ENCODE measurements at regions of chr5 and their contacts with region 1.

Region 1: DNA sequence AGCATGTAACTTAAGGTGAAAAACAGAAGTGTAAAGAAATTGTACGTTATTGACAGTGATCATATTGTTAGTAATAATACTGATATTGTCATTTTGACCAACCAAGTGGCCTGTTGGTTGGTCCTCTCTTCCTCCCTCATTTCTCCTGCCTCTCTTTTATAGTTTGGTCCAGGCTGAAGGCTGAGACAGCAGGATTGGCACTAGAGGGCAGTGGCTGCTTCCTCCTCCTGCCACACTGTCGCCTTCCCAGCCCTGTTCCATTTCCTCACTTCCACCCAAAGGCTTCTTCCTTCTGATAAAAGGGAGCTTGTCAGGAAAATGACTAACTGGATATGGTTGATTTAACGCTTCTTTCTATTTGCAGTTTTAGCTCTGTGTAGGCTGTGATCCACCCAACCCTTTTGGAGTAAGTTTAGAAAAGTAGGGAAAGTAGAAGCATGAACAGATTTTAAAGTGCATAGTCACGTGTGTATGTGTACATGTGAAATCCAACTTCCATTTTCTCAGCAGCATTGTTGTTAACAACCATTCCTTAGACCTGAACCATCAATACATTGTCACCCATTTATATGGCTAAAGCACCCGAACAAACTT is 35.6 kb downstream of the PTCD2 start:
- DNase-seq: peak; percentile 16 to 29
- ATAC-seq: peak; percentile 39 to 91
- H3K4me3 ChIP-seq: no peak overlapping the region
- H3K27ac ChIP-seq: no peak overlapping the region
- H3K4me1 ChIP-seq: no peaks in the 10 kb centered on the region
- H3K27me3 ChIP-seq: no peaks in the 10 kb centered on the region
- CTCF ChIP-seq: peak in 4 of 5 experiments; percentile 27 to 57 (median 38)
- POLR2A ChIP-seq: no peak

Region 2: DNA sequence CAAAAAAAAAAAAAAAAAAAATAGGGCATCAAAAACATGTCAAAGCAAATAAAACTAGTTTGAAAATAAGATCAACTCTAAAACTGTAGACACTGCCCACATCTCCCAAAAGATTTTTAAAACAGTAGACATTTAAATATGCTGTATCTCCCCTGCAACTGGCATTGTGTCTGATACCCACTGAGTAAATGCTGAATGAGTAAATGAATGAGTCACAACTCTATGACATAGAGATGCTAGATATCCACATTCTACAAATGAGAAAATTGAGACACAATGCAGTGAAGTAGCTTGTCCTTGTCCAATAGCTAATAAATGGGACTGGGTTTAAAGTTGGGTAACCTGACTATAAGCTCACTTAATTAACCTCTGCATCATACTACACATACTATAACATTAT is 262.6 kb before region 1 on chr5:
- in situ Hi-C with region 1: no loop called
- intact Hi-C with region 1: no loop called
- DNase-seq: no peak
- ATAC-seq: no peak
- H3K4me3 ChIP-seq: no peak overlapping the region
- H3K27ac ChIP-seq: no peak overlapping the region
- H3K4me1 ChIP-seq: no peaks in the 10 kb centered on the region
- H3K27me3 ChIP-seq: no peaks in the 10 kb centered on the region
- CTCF ChIP-seq: no peak
- POLR2A ChIP-seq: no peak

Region 3: DNA sequence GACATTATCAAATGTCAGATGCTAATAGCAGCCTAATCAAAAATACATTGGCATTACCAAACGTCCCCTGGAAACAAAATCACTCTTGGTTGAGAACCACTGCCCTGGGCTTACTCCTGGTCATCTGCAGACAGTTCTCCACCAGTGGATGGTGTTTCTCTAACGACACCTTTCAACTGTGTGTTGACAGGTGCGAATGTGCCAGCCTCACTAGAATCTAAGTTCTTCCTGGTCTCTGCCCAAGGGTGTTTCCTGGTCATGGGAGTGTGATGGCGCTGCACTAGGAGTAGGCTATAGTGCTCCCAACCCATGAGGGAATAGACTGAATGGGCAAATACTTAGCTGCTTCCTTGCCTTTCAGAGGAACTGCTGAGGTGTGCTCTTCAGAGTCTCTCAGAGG is 141.6 kb before region 1 on chr5:
- in situ Hi-C with region 1: no loop called
- intact Hi-C with region 1: no loop called
- DNase-seq: no peak
- ATAC-seq: no peak
- H3K4me3 ChIP-seq: no peak overlapping the region
- H3K27ac ChIP-seq: no peak overlapping the region
- H3K4me1 ChIP-seq: peaks cover 5 to 6% of the 10 kb centered on the region in 2 donors
- H3K27me3 ChIP-seq: no peaks in the 10 kb centered on the region
- CTCF ChIP-seq: no peak
- POLR2A ChIP-seq: no peak

Region 4: DNA sequence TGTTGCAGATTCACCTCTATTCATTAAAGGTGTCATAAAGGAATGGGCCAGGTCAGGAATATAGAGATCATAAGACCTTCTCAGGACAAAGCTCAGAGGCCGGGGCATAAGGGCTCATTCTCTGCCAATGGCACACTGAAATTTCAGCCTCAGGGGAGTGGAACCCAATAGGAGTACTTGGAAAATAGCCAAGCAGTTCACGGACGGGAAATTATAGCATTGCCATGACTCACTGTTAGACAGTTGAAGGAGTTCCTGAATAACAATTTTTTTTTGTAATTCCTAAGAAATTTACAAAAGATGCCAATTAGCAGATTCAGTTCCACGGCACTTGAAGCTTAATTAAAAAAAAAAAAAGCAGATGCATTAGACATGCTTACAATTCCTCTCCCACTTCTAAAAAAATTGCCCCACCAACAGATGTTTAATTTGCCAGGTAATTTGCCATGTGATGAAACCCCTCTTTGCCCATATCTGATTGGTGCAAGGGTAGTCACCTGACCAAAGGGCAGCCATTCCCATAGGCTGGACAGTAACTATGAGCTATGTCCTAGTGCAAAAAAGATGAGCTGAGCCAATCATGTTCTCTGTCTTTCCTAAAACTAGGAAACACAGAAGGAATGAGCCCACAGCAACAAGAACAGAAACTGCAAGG is 23.0 kb after region 1 on chr5:
- in situ Hi-C with region 1: no loop called
- intact Hi-C with region 1: no loop called
- DNase-seq: peak; percentile 69 to 78
- ATAC-seq: peak; percentile 86 to 88
- H3K4me3 ChIP-seq: no peak overlapping the region
- H3K27ac ChIP-seq: peak overlapping the region; percentile 62 to 81 (median 76)
- H3K4me1 ChIP-seq: peaks cover 23 to 30% of the 10 kb centered on the region in 2 donors
- H3K27me3 ChIP-seq: no peaks in the 10 kb centered on the region
- CTCF ChIP-seq: no peak
- POLR2A ChIP-seq: no peak

Region 5: GRCh38 chr5:72523960-72524582 is 168.3 kb after region 1 on chr5:
- in situ Hi-C with region 1: loop called in 1 of 4 experiments (anchors 5 kb)
- intact Hi-C with region 1: no loop called
- DNase-seq: no peak
- ATAC-seq: peak; percentile 85 to 93
- H3K4me3 ChIP-seq: no peak overlapping the region
- H3K27ac ChIP-seq: peak overlapping the region in 3 of 4 donors; percentile 15 to 44 (median 33)
- H3K4me1 ChIP-seq: peaks cover 3 to 4% of the 10 kb centered on the region in 2 donors
- H3K27me3 ChIP-seq: no peaks in the 10 kb centered on the region
- CTCF ChIP-seq: peak; percentile 54 to 68 (median 65)
- POLR2A ChIP-seq: no peak

Measured in gastrocnemius medialis (tissue), 4 donors.